GM12878 (cell line): ENCODE measurements at regions of chr4 and their contacts with region 1.

Region 1: DNA sequence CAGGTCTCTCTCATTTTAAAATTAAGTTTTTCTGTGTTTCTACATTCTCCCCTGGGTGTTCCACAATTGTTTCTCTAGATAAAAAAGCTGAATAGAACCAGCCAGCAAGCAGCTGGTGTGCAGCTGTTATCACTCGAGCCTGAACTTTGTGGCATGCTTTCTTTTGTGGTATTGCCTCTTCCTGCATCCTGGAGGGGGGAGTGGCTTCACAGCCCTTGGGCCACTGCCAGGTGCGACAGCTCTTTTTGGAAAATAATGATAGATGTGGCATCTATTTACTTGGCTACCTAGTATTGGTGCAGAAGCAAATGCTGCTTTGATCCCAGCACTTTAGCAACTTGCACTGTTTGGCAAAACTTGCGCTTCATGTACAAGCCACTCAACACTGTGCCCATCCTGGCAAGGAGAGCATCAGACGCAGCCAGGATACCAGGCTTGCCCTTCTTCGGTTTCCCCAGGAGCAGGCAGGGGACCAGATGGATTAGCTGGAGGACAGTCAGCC is 69.4 kb downstream of the HMGB2 start:
- DNase-seq: no peak
- ATAC-seq: peak; percentile 74
- H3K4me3 ChIP-seq: no peak overlapping the region
- H3K27ac ChIP-seq: no peak overlapping the region
- H3K4me1 ChIP-seq: peaks cover 4% of the 10 kb centered on the region; the same call in 1 of the 2 replicates
- H3K27me3 ChIP-seq: no peaks in the 10 kb centered on the region
- CTCF ChIP-seq: no peak
- EP300 ChIP-seq: no peak; a peak in 1 of 4 replicates
- POLR2A ChIP-seq: no peak
- RAD21 ChIP-seq: no peak

Region 2: GRCh38 chr4:173025131-173025530 is 239.6 kb before region 1 on chr4:
- CTCF ChIA-PET with region 1: interaction called, 35 read pairs
- POLR2A ChIA-PET with region 1: no interaction called
- RAD21 ChIA-PET with region 1: interaction called, 6 read pairs
- SMC1A ChIA-PET with region 1: interaction called, 8 read pairs
- in situ Hi-C with region 1: no loop called
- intact Hi-C with region 1: no loop called
- DNase-seq: peak; percentile 16
- ATAC-seq: peak; percentile 95
- H3K4me3 ChIP-seq: no peak overlapping the region
- H3K27ac ChIP-seq: no peak overlapping the region
- H3K4me1 ChIP-seq: no peaks in the 10 kb centered on the region
- H3K27me3 ChIP-seq: no peaks in the 10 kb centered on the region; a peak in 1 of 4 replicates
- CTCF ChIP-seq: peak; percentile 54 to 63 (median 58); a peak in 5 of 6 replicates
- EP300 ChIP-seq: no peak
- POLR2A ChIP-seq: no peak
- RAD21 ChIP-seq: peak; percentile 91